ENCODE measurements at regions of chr11 and their contacts with region 1.

Region 1: GRCh38 chr11:17354601-17354991 is 3.0 kb downstream of the NCR3LG1 start:
- DNase-seq: peak; percentile 47
- H3K4me3 ChIP-seq: no peak overlapping the region
- H3K27ac ChIP-seq: no peak overlapping the region
- H3K4me1 ChIP-seq: no peaks in the 10 kb centered on the region
- H3K27me3 ChIP-seq: no peaks in the 10 kb centered on the region
- CTCF ChIP-seq: peak in 3 of 4 experiments; percentile 49 to 51 (median 50)
- POLR2A ChIP-seq: no peak

Region 2: DNA sequence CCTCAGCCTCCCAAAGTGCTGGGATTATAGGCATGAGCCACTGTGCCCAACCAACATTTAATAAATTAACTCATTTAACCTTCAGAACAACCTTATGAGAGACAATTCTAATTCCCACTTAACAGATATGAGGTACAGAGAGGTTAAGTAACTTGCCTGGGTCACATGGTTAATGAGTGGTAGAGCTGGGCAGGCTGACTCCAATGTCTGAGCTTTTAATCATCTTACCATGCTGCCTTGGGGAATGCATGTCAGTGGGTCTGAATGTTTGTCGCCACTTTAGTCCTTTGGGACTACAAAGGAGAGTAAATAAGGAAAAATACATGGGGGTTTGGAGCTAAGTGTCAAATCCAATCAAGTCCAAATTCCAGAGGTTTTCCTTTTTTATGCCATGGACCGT is 135.6 kb before region 1 on chr11:
- intact Hi-C with region 1: loop called (anchors 10 kb)
- DNase-seq: no peak
- H3K4me3 ChIP-seq: no peak overlapping the region
- H3K27ac ChIP-seq: no peak overlapping the region
- H3K4me1 ChIP-seq: no peaks in the 10 kb centered on the region
- H3K27me3 ChIP-seq: no peaks in the 10 kb centered on the region
- CTCF ChIP-seq: no peak
- POLR2A ChIP-seq: no peak

Measured in prostate gland (tissue), 2 donors.